BJ (cell line): ENCODE measurements at regions of chr3 and their contacts with region 1.

Region 1: DNA sequence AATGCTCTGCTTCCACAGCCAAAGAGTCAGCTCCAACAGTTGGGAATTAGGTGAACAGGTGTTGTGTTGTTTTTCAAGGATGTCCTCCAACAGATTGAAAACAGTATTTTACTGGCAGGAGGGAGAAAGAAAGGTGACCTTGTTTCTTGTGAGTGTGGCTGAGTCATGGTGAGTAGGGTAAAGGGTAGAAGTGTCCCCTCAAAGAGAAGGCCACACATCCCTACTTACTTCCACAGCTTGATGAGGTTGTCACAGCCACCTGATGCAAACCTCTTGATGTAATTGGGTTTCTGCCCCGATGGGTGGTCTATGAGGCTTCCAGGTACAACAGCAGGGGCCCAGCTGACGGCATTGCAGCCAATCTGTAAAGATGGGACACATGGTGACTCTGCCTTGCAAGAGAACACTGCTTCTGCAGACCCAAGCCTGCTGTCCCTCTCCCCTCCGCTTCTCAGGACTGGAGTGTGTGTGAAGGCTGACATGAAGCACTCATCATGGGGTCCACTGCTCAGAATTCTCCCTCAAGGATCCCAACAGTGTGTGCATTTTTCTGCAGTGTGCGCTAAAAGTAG is 12.7 kb upstream of the GHRL start:
- DNase-seq: no peak
- H3K4me3 ChIP-seq: no peak overlapping the region
- H3K27me3 ChIP-seq: no peaks in the 10 kb centered on the region
- CTCF ChIP-seq: no peak

Region 2: DNA sequence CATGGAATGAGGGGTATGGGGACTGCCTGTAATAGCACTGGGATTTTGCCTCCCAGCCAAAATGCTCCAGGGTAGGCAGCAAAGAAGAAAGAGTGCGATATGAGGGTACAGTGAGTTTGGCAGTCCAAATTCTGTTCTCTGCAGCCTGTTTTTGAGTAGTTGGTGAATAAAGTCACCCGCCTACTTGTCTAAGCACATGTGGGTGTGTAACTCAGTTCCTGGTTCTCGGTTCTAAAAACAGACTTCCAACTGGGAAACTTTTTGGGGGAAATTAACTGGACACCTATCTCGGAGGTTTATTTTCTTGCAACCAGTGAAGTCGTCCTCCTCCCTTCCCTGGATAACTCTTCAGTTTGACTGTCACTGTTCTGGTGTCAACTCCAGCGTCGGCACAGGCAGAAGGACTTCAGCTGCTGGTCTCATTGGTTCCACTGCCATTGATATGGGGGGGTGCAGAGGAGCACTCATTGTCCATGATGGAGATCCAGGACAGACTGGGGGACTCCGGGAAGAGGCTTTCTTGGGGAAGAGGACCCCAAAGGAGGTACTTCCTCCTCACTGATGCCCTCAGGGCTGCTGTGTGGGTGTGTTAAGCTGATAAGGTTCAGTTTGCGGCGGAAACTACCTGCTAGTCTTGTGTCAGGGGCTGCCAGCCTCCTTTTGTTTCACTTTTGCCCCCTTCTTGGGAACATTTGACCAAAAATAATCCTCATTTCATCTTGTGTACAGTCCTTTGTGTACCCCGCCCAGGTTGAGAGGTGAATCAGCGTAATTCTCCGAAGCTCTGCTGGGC is 25.8 kb before region 1 on chr3:
- CTCF ChIA-PET with region 1: no interaction called
- POLR2A ChIA-PET with region 1: no interaction called
- DNase-seq: no peak
- H3K4me3 ChIP-seq: no peak overlapping the region
- H3K27me3 ChIP-seq: no peaks in the 10 kb centered on the region
- CTCF ChIP-seq: no peak

Region 3: GRCh38 chr3:10289787-10290355 is 15.5 kb before region 1 on chr3:
- CTCF ChIA-PET with region 1: interaction called, 10 read pairs
- POLR2A ChIA-PET with region 1: no interaction called
- DNase-seq: no peak
- H3K4me3 ChIP-seq: no peak overlapping the region
- H3K27me3 ChIP-seq: no peaks in the 10 kb centered on the region
- CTCF ChIP-seq: no peak

Region 4: GRCh38 chr3:10683106-10683505 is 377.7 kb after region 1 on chr3:
- CTCF ChIA-PET with region 1: no interaction called
- POLR2A ChIA-PET with region 1: no interaction called
- DNase-seq: no peak
- H3K4me3 ChIP-seq: no peak overlapping the region
- H3K27me3 ChIP-seq: no peaks in the 10 kb centered on the region
- CTCF ChIP-seq: no peak